CD8-positive, alpha-beta T cell (primary cell): ENCODE measurements at regions of chr6 and their contacts with region 1.

Region 1: DNA sequence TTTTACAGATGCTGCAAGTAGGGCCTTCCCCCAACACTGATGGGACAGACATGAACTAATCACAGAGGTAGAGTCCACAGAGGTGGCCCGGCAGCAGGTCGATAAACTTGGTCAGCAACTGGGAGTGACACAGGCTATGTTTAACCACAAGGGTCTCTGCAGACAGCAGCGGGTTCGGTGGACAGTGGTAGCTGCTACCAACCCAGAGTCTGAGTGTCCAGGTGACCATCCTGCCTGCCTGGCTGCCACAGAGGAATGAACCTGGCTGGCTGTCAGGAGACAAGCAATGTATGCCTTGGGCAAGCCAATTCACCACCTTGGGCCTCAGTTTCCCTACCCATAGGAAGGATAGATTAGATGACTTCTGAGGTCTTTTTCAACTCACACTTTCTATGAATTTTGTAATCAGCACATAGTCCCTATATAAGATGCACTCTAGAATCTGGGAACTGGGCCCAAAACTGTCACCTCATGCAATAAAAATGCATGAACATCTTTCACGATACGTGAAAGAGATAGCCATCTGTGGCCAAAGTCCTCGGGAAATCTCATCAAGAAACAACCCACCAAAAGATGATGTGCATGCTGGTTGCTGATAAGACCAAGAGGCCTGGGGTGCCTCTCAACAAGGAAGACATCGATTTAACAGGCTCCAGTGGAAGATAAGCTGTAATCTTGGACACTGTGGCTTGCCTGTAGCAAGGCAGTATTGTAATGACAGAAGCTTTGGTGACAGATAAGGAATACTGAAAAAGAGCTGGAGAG is 30.5 kb downstream of the MDGA1 start:
- DNase-seq: no peak
- ATAC-seq: no peak
- H3K4me3 ChIP-seq: no peak overlapping the region
- H3K4me3 Mint-ChIP-seq: no peak overlapping the region
- H3K27ac ChIP-seq: no peak overlapping the region
- H3K27ac Mint-ChIP-seq: no peak overlapping the region
- H3K4me1 ChIP-seq: no peaks in the 10 kb centered on the region
- H3K4me1 Mint-ChIP-seq: no peaks in the 10 kb centered on the region
- H3K27me3 ChIP-seq: no peaks in the 10 kb centered on the region
- H3K27me3 Mint-ChIP-seq: no peaks in the 10 kb centered on the region
- CTCF ChIP-seq: no peak

Region 2: DNA sequence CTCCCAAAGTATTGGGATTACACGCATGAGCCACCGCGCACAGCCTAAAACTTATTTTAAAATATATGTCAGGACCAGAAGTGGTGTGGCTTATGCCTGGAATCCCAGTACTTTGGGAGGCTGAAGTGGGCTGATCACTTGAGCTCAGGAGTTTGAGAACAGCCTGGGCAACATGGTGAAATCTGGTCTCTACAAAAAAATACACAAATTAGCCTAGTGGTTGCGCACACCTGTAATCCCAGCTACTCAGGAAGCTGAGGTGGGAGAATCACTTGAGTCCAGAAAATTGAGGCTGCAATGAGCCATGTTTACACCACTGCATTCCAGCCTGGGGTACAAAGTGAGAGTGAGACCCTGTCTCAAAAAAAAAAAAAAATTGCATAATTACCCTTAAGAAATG is 1238.3 kb before region 1 on chr6:
- CTCF ChIA-PET with region 1: no interaction called
- POLR2A ChIA-PET with region 1: no interaction called
- intact Hi-C with region 1: no loop called
- DNase-seq: no peak
- ATAC-seq: no peak
- H3K4me3 ChIP-seq: no peak overlapping the region
- H3K4me3 Mint-ChIP-seq: no peak overlapping the region
- H3K27ac ChIP-seq: no peak overlapping the region
- H3K27ac Mint-ChIP-seq: no peak overlapping the region
- H3K4me1 ChIP-seq: peaks cover under 1% of the 10 kb centered on the region
- H3K4me1 Mint-ChIP-seq: peaks cover under 1% of the 10 kb centered on the region
- H3K27me3 ChIP-seq: no peaks in the 10 kb centered on the region
- H3K27me3 Mint-ChIP-seq: no peaks in the 10 kb centered on the region
- CTCF ChIP-seq: no peak

Region 3: DNA sequence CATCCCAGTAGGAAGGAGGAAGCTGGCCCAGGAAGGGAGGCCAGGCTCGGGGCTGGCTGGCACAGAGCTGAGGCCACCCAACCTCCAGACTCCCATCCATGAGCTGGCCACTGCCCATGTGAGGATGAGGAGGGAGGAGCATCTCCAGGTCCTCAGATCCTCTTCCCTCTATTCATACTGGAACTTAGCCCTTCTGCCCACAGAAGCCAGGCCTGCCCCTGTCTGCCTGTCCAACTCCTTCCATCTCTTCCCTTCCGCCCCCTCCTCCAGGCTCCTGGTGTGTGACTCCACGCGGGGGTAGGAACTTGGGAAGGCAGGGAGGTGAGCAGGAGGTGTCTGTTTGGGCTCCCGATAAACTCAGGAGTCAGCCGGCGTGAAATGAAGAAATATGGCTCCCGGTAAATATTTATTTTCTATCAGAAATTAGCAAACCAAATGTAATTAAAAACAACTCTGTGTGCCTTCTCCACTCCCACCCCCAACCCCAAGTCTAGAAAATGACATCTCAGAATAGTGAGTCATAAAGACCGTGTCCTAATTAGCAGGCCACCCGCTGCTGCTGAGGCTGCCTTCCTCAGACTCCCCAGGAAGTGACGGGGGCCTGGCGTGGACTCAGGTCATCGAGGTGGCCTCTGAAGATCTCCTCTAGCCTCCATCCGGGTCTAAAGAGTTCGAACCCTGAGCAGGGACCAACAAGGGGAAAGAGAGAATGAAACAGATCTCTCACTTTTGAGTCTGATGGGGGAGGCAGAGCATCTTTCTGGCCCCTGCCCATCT is 51.5 kb before region 1 on chr6:
- CTCF ChIA-PET with region 1: no interaction called
- POLR2A ChIA-PET with region 1: no interaction called
- intact Hi-C with region 1: no loop called
- DNase-seq: no peak
- ATAC-seq: no peak
- H3K4me3 ChIP-seq: no peak overlapping the region
- H3K4me3 Mint-ChIP-seq: no peak overlapping the region
- H3K27ac ChIP-seq: no peak overlapping the region
- H3K27ac Mint-ChIP-seq: no peak overlapping the region
- H3K4me1 ChIP-seq: peaks cover 13% of the 10 kb centered on the region
- H3K4me1 Mint-ChIP-seq: peaks cover 14% of the 10 kb centered on the region
- H3K27me3 ChIP-seq: no peaks in the 10 kb centered on the region
- H3K27me3 Mint-ChIP-seq: peaks cover 13% of the 10 kb centered on the region
- CTCF ChIP-seq: no peak

Region 4: DNA sequence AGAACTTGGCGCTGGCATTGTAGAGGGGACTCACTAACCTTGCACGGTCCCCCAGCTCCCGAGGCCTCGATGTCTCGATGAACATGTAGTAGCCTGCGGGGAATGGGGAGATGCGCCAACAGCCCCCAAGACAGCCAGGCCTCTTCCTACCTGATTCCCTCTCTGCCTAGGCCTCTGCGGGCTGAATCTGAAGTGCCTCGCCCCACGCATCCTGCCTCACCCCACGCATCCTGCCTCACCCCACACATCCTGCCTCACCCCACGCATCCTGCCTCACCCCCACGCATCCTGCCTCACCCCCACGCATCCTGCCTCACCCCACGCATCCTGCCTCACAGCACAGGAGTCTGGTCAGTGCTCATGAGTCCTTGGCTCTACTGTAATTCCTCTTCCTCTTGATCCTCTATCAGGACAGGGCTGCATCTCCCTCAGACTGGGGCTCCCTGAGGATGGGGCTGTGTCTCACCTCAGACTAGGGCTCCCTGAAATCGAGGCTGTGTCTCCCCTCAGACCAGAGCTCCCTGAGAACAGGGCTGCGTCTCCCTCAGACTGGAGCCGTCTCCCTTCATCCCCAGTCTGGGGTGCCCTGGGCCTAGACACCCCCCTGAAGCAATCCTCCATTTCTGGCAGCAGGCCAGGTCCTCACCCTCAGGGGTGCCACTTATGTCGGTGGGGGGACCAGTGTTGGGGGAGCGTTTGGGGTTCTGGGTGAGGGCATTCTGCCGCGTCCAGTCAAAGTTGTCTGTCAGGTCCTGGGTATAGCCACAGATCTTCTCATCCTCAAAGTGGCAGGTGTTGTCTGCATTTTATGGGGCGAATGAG is 23.2 kb before region 1 on chr6:
- CTCF ChIA-PET with region 1: no interaction called
- POLR2A ChIA-PET with region 1: no interaction called
- intact Hi-C with region 1: loop called in 1 of 2 experiments (anchors 1 kb)
- DNase-seq: peak in 8 of 9 experiments; percentile 15 to 82 (median 29)
- ATAC-seq: peak; percentile 39
- H3K4me3 ChIP-seq: no peak overlapping the region
- H3K4me3 Mint-ChIP-seq: peak overlapping the region; percentile 15
- H3K27ac ChIP-seq: peak overlapping the region in 1 of 2 experiments; percentile 56
- H3K27ac Mint-ChIP-seq: peak overlapping the region; percentile 72
- H3K4me1 ChIP-seq: peaks cover 33% of the 10 kb centered on the region
- H3K4me1 Mint-ChIP-seq: peaks cover 30% of the 10 kb centered on the region
- H3K27me3 ChIP-seq: peaks cover 2 to 8% of the 10 kb centered on the region in 2 experiments
- H3K27me3 Mint-ChIP-seq: peaks cover 24% of the 10 kb centered on the region
- CTCF ChIP-seq: no peak

Region 5: GRCh38 chr6:37774028-37774680 is 106.9 kb after region 1 on chr6:
- CTCF ChIA-PET with region 1: no interaction called
- POLR2A ChIA-PET with region 1: no interaction called
- intact Hi-C with region 1: no loop called
- DNase-seq: no peak
- ATAC-seq: no peak
- H3K4me3 ChIP-seq: no peak overlapping the region
- H3K4me3 Mint-ChIP-seq: no peak overlapping the region
- H3K27ac ChIP-seq: no peak overlapping the region
- H3K27ac Mint-ChIP-seq: no peak overlapping the region
- H3K4me1 ChIP-seq: no peaks in the 10 kb centered on the region
- H3K4me1 Mint-ChIP-seq: no peaks in the 10 kb centered on the region
- H3K27me3 ChIP-seq: no peaks in the 10 kb centered on the region
- H3K27me3 Mint-ChIP-seq: peaks cover 5% of the 10 kb centered on the region
- CTCF ChIP-seq: no peak